Activated CD8-positive, alpha-beta T cell treated with anti-CD3 and anti-CD28 coated beads for 36 hours (primary cell): ENCODE measurements at regions of chr1 and their contacts with region 1.

Region 1: GRCh38 chr1:199113265-199113869 is 474.5 kb downstream of the PTPRC start:
- DNase-seq: peak; percentile 81
- ATAC-seq: peak; percentile 69
- H3K4me3 Mint-ChIP-seq: no peak overlapping the region
- H3K27ac Mint-ChIP-seq: no peak overlapping the region
- H3K4me1 Mint-ChIP-seq: peaks cover 4% of the 10 kb centered on the region
- H3K27me3 Mint-ChIP-seq: peaks cover 1% of the 10 kb centered on the region
- CTCF ChIP-seq: peak; percentile 80

Region 2: GRCh38 chr1:198763298-198763714 is 350.1 kb before region 1 on chr1:
- CTCF ChIA-PET with region 1: interaction called, 14 read pairs
- POLR2A ChIA-PET with region 1: no interaction called
- intact Hi-C with region 1: loop called (anchors 5 kb)
- DNase-seq: no peak
- ATAC-seq: peak; percentile 53
- H3K4me3 Mint-ChIP-seq: no peak overlapping the region
- H3K27ac Mint-ChIP-seq: no peak overlapping the region
- H3K4me1 Mint-ChIP-seq: peaks cover 46% of the 10 kb centered on the region
- H3K27me3 Mint-ChIP-seq: no peaks in the 10 kb centered on the region
- CTCF ChIP-seq: no peak

Region 3: DNA sequence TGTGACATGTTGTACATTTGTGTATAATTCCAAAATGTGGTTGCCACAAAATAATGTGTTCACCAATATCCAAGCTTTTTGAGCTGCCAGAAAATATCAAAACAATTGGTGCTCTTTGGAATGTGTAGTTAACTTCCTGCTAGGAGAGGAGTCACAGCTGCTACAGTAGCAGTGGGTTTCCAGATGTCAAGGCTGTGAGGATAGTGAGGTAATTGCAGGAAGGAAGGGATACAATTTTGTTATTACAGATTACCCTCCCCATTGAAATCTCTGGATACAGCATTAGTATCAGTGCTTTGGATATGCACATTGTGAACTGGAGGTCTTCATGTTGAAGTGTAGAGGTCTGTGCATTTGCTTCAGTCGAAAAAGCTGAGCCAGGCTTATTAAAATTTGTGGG is 221.3 kb before region 1 on chr1:
- CTCF ChIA-PET with region 1: interaction called, 10 read pairs
- POLR2A ChIA-PET with region 1: no interaction called
- intact Hi-C with region 1: no loop called
- DNase-seq: no peak
- ATAC-seq: no peak
- H3K4me3 Mint-ChIP-seq: no peak overlapping the region
- H3K27ac Mint-ChIP-seq: no peak overlapping the region
- H3K4me1 Mint-ChIP-seq: peaks cover 3% of the 10 kb centered on the region
- H3K27me3 Mint-ChIP-seq: no peaks in the 10 kb centered on the region
- CTCF ChIP-seq: no peak

Region 4: GRCh38 chr1:199041173-199041914 is 72.0 kb before region 1 on chr1:
- CTCF ChIA-PET with region 1: interaction called, 10 read pairs
- POLR2A ChIA-PET with region 1: no interaction called
- intact Hi-C with region 1: no loop called
- DNase-seq: peak; percentile 48
- ATAC-seq: peak; percentile 83
- H3K4me3 Mint-ChIP-seq: peak overlapping the region; percentile 20
- H3K27ac Mint-ChIP-seq: peak overlapping the region; percentile 75
- H3K4me1 Mint-ChIP-seq: peaks cover 27% of the 10 kb centered on the region
- H3K27me3 Mint-ChIP-seq: peaks cover 4% of the 10 kb centered on the region
- CTCF ChIP-seq: no peak

Region 5: GRCh38 chr1:199089393-199090122 is 23.8 kb before region 1 on chr1:
- CTCF ChIA-PET with region 1: interaction called, 17 read pairs
- POLR2A ChIA-PET with region 1: no interaction called
- intact Hi-C with region 1: no loop called
- DNase-seq: peak; percentile 76
- ATAC-seq: peak; percentile 91
- H3K4me3 Mint-ChIP-seq: no peak overlapping the region
- H3K27ac Mint-ChIP-seq: peak overlapping the region; percentile 22
- H3K4me1 Mint-ChIP-seq: peaks cover 18% of the 10 kb centered on the region
- H3K27me3 Mint-ChIP-seq: no peaks in the 10 kb centered on the region
- CTCF ChIP-seq: no peak

Region 6: GRCh38 chr1:199243423-199244061 is 130.2 kb after region 1 on chr1:
- CTCF ChIA-PET with region 1: interaction called, 17 read pairs
- POLR2A ChIA-PET with region 1: no interaction called
- intact Hi-C with region 1: no loop called
- DNase-seq: peak; percentile 84
- ATAC-seq: peak; percentile 100
- H3K4me3 Mint-ChIP-seq: no peak overlapping the region
- H3K27ac Mint-ChIP-seq: no peak overlapping the region
- H3K4me1 Mint-ChIP-seq: peaks cover 4% of the 10 kb centered on the region
- H3K27me3 Mint-ChIP-seq: peaks cover 4% of the 10 kb centered on the region
- CTCF ChIP-seq: peak; percentile 83

Region 7: DNA sequence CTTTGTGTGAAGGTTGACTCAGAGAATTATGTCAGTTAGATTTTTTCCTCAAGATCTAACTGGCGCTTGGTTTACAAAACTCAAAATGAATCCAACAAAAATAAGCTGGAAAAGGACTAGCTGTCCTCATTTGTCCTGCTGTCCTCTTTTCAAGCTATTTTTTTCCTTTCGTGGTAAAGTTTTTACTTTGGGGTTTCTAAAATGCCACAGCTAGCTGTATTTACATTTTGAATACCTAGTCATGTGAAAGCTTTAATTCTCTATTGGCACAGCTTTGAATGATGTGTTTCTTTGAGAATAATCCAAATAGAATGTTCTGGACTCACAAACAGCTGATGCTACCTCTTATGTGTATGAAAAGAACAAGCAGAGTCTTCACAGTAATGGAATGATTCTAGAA is 240.5 kb after region 1 on chr1:
- CTCF ChIA-PET with region 1: no interaction called
- POLR2A ChIA-PET with region 1: no interaction called
- intact Hi-C with region 1: no loop called
- DNase-seq: no peak
- ATAC-seq: no peak
- H3K4me3 Mint-ChIP-seq: no peak overlapping the region
- H3K27ac Mint-ChIP-seq: no peak overlapping the region
- H3K4me1 Mint-ChIP-seq: no peaks in the 10 kb centered on the region
- H3K27me3 Mint-ChIP-seq: peaks cover 7% of the 10 kb centered on the region
- CTCF ChIP-seq: no peak